ENCODE measurements at regions of chr6 and their contacts with region 1.

Region 1: GRCh38 chr6:31541658-31542521 is at the start of gene DDX39B:
- DNase-seq: peak; percentile 94
- H3K4me3 ChIP-seq: peak within 1 kb of the TSS; percentile 72 to 94 (median 75)
- H3K27ac ChIP-seq: peak within 1 kb of the TSS; percentile 97
- H3K4me1 ChIP-seq: peaks cover 32% of the 10 kb centered on the region
- H3K27me3 ChIP-seq: no peaks in the 10 kb centered on the region
- CTCF ChIP-seq: no peak
- total RNA-seq, gene DDX39B: 263 to 409 TPM

Region 2: DNA sequence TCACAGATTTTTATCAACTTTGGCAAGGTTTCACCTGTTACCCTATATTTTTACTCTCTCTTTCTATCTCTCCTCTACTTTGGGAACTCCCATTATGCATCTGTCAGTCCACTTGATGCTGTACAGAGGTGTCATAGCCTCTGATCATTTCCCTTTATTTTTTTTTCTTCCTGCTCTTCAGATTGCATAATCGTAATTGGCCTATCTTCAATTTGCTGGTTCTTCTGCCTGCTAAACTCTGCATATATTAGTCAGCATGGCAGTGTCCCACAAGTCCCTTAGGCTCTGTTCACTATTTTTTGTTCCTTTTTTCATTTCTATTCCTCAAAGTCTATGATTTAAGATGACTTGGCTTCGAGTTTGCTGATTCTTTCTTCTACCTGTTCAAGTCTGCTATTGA is 88.6 kb before region 1 on chr6:
- CTCF ChIA-PET with region 1: no interaction called
- dilution Hi-C with region 1: no loop called
- in situ Hi-C with region 1: no loop called
- intact Hi-C with region 1: no loop called
- DNase-seq: peak; percentile 31
- H3K4me3 ChIP-seq: no peak overlapping the region
- H3K27ac ChIP-seq: no peak overlapping the region
- H3K4me1 ChIP-seq: no peaks in the 10 kb centered on the region
- H3K27me3 ChIP-seq: no peaks in the 10 kb centered on the region
- CTCF ChIP-seq: no peak

Region 3: GRCh38 chr6:31479933-31480535 is 61.9 kb before region 1 on chr6:
- CTCF ChIA-PET with region 1: no interaction called
- dilution Hi-C with region 1: loop called (anchors 5 kb)
- in situ Hi-C with region 1: no loop called
- intact Hi-C with region 1: no loop called
- DNase-seq: no peak
- H3K4me3 ChIP-seq: no peak overlapping the region
- H3K27ac ChIP-seq: no peak overlapping the region
- H3K4me1 ChIP-seq: no peaks in the 10 kb centered on the region
- H3K27me3 ChIP-seq: no peaks in the 10 kb centered on the region
- CTCF ChIP-seq: no peak

Region 4: GRCh38 chr6:31580807-31581433 is 39.0 kb after region 1 on chr6:
- CTCF ChIA-PET with region 1: interaction called, 3 read pairs
- dilution Hi-C with region 1: loop called (anchors 5 kb)
- in situ Hi-C with region 1: no loop called
- intact Hi-C with region 1: loop called (anchors 1 kb)
- DNase-seq: peak; percentile 66
- H3K4me3 ChIP-seq: peak overlapping the region; percentile 72 to 92 (median 85)
- H3K27ac ChIP-seq: peak overlapping the region; percentile 61
- H3K4me1 ChIP-seq: peaks cover 21% of the 10 kb centered on the region
- H3K27me3 ChIP-seq: no peaks in the 10 kb centered on the region
- CTCF ChIP-seq: peak; percentile 75 to 96

Region 5: GRCh38 chr6:31619805-31620585 is 78.1 kb after region 1 on chr6:
- CTCF ChIA-PET with region 1: no interaction called
- dilution Hi-C with region 1: loop called (anchors 5 kb)
- in situ Hi-C with region 1: no loop called
- intact Hi-C with region 1: loop called (anchors 1 kb)
- DNase-seq: peak; percentile 99
- H3K4me3 ChIP-seq: peak overlapping the region; percentile 55 to 88 (median 77)
- H3K27ac ChIP-seq: peak overlapping the region; percentile 96
- H3K4me1 ChIP-seq: peaks cover 16% of the 10 kb centered on the region
- H3K27me3 ChIP-seq: no peaks in the 10 kb centered on the region
- CTCF ChIP-seq: no peak

Region 6: GRCh38 chr6:31652925-31653718 is 111.2 kb after region 1 on chr6:
- CTCF ChIA-PET with region 1: no interaction called
- dilution Hi-C with region 1: loop called (anchors 5 kb)
- in situ Hi-C with region 1: no loop called
- intact Hi-C with region 1: loop called (anchors 1 kb)
- DNase-seq: no peak
- H3K4me3 ChIP-seq: peak overlapping the region; percentile 62 to 95 (median 83)
- H3K27ac ChIP-seq: peak overlapping the region; percentile 75
- H3K4me1 ChIP-seq: peaks cover 15% of the 10 kb centered on the region
- H3K27me3 ChIP-seq: no peaks in the 10 kb centered on the region
- CTCF ChIP-seq: peak in 1 of 2 donors; percentile 1

Region 7: GRCh38 chr6:31958741-31959739 is 417.1 kb after region 1 on chr6 and contains the starts of genes NELFE and SKIC2:
- CTCF ChIA-PET with region 1: no interaction called
- dilution Hi-C with region 1: no loop called
- in situ Hi-C with region 1: no loop called
- intact Hi-C with region 1: loop called (anchors 10 kb)
- DNase-seq: peak; percentile 98
- H3K4me3 ChIP-seq: peak within 1 kb of the TSS; percentile 82 to 95 (median 92)
- H3K27ac ChIP-seq: peak within 1 kb of the TSS; percentile 79
- H3K4me1 ChIP-seq: peaks cover 12% of the 10 kb centered on the region
- H3K27me3 ChIP-seq: no peaks in the 10 kb centered on the region
- CTCF ChIP-seq: no peak
- total RNA-seq, gene NELFE: 69.7 to 77.7 TPM
- total RNA-seq, gene SKIC2: 46.7 to 51.1 TPM